Activated CD4-positive, alpha-beta T cell treated with anti-CD3 and anti-CD28 coated beads, Interleukin-2, amount 10 ng/mL, durations not matched to agents 24 days and 14 days (primary cell): ENCODE measurements at regions of chr7 and their contacts with region 1.

Region 1: DNA sequence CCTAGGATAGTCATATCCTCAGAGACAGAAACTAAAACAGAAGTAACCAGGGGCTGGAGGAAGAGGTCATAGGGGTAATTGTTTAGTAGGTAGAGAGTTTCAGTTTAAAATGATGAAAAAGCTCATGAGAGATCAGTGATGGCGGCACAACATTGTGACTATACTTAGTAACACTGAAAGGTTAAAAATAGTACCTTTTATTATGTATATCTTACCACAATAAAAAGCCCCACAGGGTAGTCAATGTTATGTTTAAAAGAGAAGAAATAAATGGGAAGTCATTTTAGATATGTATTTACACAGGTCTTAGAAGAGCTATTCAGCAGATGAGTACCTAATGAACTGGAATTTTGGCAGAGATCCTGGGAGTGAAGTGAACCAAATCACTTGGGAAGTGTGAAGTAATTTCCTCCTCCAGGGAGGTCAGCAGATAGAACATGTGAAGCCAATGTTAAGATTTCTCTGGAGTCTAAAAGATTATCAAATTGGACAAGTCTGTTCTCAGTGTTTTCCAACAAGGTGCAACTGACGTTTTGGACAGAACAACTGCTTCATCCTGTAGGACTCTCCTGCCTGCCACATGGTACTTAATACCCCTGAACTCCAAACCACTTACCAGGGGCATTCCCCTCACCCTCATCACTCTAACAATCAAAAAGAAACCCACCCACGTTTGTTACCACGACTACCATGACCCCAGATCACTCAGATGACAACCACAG is 6.4 kb downstream of the CDCA7L start:
- DNase-seq: peak; percentile 79
- H3K4me3 Mint-ChIP-seq: peak overlapping the region; percentile 72
- H3K27ac Mint-ChIP-seq: peak overlapping the region; percentile 95
- H3K4me1 Mint-ChIP-seq: peaks cover 66% of the 10 kb centered on the region
- H3K27me3 Mint-ChIP-seq: no peaks in the 10 kb centered on the region

Region 2: GRCh38 chr7:21355406-21355874 is 583.9 kb before region 1 on chr7:
- intact Hi-C with region 1: loop called (anchors 1 kb)
- DNase-seq: peak; percentile 90
- H3K4me3 Mint-ChIP-seq: peak overlapping the region; percentile 77
- H3K27ac Mint-ChIP-seq: peak overlapping the region; percentile 97
- H3K4me1 Mint-ChIP-seq: peaks cover 76% of the 10 kb centered on the region
- H3K27me3 Mint-ChIP-seq: no peaks in the 10 kb centered on the region

Region 3: DNA sequence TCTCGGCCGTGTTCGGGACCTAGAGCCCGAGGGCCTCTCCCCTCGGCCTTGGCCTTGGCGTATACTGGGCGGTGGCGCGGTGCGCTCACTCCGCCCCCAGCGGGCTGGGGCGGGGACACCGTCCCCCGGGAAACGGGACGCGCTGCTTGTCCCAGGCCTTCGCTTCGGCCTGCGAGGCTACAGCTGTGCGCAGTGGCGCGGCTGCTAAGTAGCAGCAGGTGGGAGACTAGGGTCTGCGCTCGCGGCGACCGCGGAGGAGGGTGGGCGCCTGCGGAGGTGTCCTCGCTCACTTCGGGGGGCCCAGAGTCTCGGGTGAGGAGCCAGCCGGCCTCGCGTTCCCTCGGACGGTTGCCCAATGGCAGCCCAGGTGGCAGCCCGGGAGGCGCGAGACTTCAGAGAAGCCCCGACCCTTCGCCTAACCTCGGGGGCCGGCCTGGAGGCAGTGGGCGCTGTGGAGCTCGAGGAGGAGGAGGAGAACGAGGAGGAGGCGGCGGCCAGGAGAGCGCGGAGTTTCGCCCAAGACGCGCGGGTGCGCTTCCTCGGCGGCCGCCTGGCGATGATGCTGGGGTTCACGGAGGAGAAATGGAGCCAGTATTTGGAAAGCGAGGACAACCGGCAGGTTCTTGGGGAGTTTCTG is 396.3 kb before region 1 on chr7 and contains the start of gene DNAH11:
- intact Hi-C with region 1: loop called (anchors 5 kb)
- DNase-seq: peak; percentile 86
- H3K4me3 Mint-ChIP-seq: peak within 1 kb of the TSS; percentile 81
- H3K27ac Mint-ChIP-seq: peak within 1 kb of the TSS; percentile 39
- H3K4me1 Mint-ChIP-seq: peaks cover 16% of the 10 kb centered on the region
- H3K27me3 Mint-ChIP-seq: peaks cover 43% of the 10 kb centered on the region
- total RNA-seq, gene DNAH11: 3.0 and 6.1 TPM in 2 replicates

Region 4: DNA sequence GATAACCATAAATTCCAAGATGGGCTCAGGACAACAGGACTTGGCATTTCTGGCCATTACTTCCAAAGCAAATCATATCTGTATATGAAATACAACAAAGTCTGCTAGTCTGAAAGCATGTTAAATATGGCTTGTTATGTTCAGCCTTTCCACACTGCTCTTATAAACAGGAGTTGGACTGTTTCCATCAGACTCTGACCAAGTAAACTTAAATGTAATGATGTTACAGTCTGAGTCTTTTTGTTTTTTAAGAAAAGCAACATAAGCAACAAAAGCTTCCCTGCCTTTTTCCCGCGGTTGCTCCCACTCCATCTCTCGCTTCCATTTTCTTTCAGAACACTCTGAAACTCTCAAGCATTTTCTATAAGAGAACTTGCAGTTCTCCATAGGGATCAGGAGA is 14.5 kb after region 1 on chr7:
- intact Hi-C with region 1: no loop called
- DNase-seq: no peak
- H3K4me3 Mint-ChIP-seq: no peak overlapping the region
- H3K27ac Mint-ChIP-seq: no peak overlapping the region
- H3K4me1 Mint-ChIP-seq: peaks cover 4% of the 10 kb centered on the region
- H3K27me3 Mint-ChIP-seq: peaks cover 23% of the 10 kb centered on the region

Region 5: DNA sequence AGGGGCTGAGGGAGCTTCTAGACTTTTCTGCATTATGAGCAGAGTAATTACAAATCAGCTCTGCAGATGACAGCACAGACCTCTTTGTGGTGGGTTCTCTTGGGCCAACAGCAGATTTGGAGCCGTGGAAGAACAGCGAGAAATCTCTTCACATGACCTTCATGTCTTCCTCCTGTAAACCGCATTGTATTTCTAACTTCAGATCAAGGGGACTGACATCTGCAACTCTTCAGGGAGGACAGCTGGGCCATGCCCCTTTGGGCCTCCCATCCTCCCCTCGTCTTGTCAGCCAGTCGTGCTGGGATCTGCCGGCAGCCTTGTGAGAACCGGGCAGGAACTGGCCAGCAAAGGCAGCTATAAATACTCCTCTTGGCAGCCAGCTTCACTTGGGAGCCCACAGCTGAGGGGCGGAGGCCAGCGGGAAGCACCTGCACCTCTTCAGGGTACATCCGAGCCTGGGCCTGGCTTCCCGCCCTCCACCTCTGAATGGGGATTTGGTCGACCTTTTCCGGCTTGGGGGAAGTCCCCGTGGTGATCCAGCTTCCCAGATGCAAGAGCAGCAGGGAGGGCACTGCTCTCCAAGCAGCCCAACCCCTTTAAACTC is 505.9 kb after region 1 on chr7:
- intact Hi-C with region 1: loop called (anchors 5 kb)
- DNase-seq: no peak
- H3K4me3 Mint-ChIP-seq: no peak overlapping the region
- H3K27ac Mint-ChIP-seq: no peak overlapping the region
- H3K4me1 Mint-ChIP-seq: peaks cover 10% of the 10 kb centered on the region
- H3K27me3 Mint-ChIP-seq: peaks cover 18% of the 10 kb centered on the region

Region 6: DNA sequence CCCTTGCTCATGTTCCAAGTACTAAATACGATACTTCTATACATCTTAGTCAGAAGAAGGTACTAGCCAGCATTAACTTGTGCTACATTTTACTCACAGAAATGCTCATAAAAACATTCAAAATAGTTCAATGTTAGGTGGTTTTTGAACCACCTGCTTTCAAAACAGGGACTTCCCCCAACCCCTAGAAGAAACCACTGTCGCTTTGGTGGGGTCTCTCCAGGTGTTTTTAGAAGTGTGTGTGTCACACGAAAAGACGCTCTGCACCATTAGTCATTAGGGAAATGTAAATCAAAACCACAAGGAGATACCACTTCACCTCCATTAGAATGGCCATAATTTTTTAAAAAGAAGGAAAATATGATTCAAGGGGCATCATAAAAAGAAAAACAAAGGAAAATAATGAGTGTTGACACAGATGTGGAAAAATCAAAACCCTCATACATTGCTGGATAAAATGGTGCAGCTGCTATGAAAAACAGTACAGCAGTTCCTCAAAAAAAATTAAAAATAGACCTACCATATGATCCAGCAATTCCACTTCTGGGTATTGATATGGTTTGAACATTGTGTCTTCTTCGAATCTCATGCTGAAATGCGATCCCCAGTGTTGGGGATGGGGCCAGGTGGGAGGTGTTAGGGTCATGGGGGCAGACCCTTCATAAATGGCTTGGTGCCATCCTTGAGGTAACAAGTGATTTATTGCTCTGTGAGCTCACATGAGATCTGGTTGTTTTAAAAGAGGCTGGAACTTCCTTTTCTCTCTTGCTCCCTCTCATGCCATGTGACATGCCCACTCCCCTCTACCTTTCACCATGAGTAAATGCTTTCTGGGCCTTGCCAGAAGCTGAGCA is 1434.1 kb after region 1 on chr7:
- intact Hi-C with region 1: loop called (anchors 5 kb)
- DNase-seq: peak; percentile 80
- H3K4me3 Mint-ChIP-seq: peak overlapping the region; percentile 37
- H3K27ac Mint-ChIP-seq: peak overlapping the region; percentile 94
- H3K4me1 Mint-ChIP-seq: peaks cover 51% of the 10 kb centered on the region
- H3K27me3 Mint-ChIP-seq: peaks cover 17% of the 10 kb centered on the region